ENCODE measurements at regions of chr10 and their contacts with region 1.

Region 1: DNA sequence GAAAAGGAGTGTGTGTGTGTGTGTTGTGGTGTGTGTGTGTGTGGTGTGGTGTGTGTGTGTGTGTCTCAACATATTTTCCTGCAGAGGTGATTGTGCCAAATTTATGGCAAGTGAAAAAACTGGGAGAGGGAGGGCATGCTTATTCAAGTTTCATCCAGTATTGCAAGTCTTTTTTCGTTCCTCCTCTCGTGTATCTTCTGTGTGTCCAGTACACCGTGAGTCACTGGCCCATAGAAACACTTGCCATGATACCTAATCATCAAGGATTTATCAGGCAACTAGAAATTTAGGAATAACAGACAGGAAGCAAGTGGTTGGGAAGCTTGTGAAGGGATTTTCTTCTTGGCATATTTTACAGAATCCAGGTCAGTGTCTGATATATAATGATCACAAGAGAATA is 820.5 kb downstream of the GATA3 start:
- DNase-seq: no peak
- H3K4me3 Mint-ChIP-seq: no peak overlapping the region
- H3K27ac Mint-ChIP-seq: no peak overlapping the region
- H3K4me1 Mint-ChIP-seq: no peaks in the 10 kb centered on the region
- H3K27me3 Mint-ChIP-seq: peaks cover 2% of the 10 kb centered on the region

Region 2: GRCh38 chr10:7984896-7985295 is 890.1 kb before region 1 on chr10:
- CTCF ChIA-PET with region 1: no interaction called
- intact Hi-C with region 1: loop called (anchors 5 kb)
- DNase-seq: no peak
- H3K4me3 Mint-ChIP-seq: no peak overlapping the region
- H3K27ac Mint-ChIP-seq: no peak overlapping the region
- H3K4me1 Mint-ChIP-seq: no peaks in the 10 kb centered on the region
- H3K27me3 Mint-ChIP-seq: no peaks in the 10 kb centered on the region

Region 3: GRCh38 chr10:8861717-8862496 is 13.1 kb before region 1 on chr10:
- CTCF ChIA-PET with region 1: no interaction called
- intact Hi-C with region 1: no loop called
- DNase-seq: no peak
- H3K4me3 Mint-ChIP-seq: no peak overlapping the region
- H3K27ac Mint-ChIP-seq: no peak overlapping the region
- H3K4me1 Mint-ChIP-seq: no peaks in the 10 kb centered on the region
- H3K27me3 Mint-ChIP-seq: no peaks in the 10 kb centered on the region

Measured in activated naive CD4-positive, alpha-beta T cell treated with anti-CD3 and anti-CD28 coated beads for 36 hours (primary cell).